ENCODE measurements at regions of chr7 and their contacts with region 1.

Region 1: GRCh38 chr7:140084972-140085371 is 22.2 kb upstream of the PARP12 start:
- DNase-seq: no peak
- H3K4me3 ChIP-seq: no peak overlapping the region
- H3K4me3 Mint-ChIP-seq: peak overlapping the region in 7 of 8 donors; percentile 2 to 64 (median 26)
- H3K27ac ChIP-seq: no peak overlapping the region
- H3K27ac Mint-ChIP-seq: peak overlapping the region in 6 of 7 donors; percentile 2 to 82 (median 70)
- H3K4me1 ChIP-seq: peaks cover 21% of the 10 kb centered on the region
- H3K4me1 Mint-ChIP-seq: peaks cover 23 to 35% (median 29%) of the 10 kb centered on the region in 4 donors
- H3K27me3 ChIP-seq: no peaks in the 10 kb centered on the region
- H3K27me3 Mint-ChIP-seq: no peaks in the 10 kb centered on the region

Region 2: GRCh38 chr7:140062528-140063299 is 22.3 kb before region 1 on chr7 and contains the start of gene PARP12:
- CTCF ChIA-PET with region 1: interaction called, 3 read pairs
- POLR2A ChIA-PET with region 1: interaction called, 5 read pairs
- intact Hi-C with region 1: loop called (anchors 2 kb)
- DNase-seq: peak; percentile 84 to 89 (median 86)
- H3K4me3 ChIP-seq: peak within 1 kb of the TSS; percentile 54 to 89
- H3K4me3 Mint-ChIP-seq: peak within 1 kb of the TSS; percentile 92 to 96 (median 95)
- H3K27ac ChIP-seq: peak within 1 kb of the TSS; percentile 84
- H3K27ac Mint-ChIP-seq: peak within 1 kb of the TSS; percentile 86 to 99 (median 91)
- H3K4me1 ChIP-seq: peaks cover 45% of the 10 kb centered on the region
- H3K4me1 Mint-ChIP-seq: peaks cover 31 to 56% (median 43%) of the 10 kb centered on the region in 4 donors
- H3K27me3 ChIP-seq: no peaks in the 10 kb centered on the region
- H3K27me3 Mint-ChIP-seq: no peaks in the 10 kb centered on the region
- total RNA-seq, gene PARP12: 91.8 to 96.6 TPM

Region 3: GRCh38 chr7:140122965-140123364 is 38.0 kb after region 1 on chr7:
- CTCF ChIA-PET with region 1: no interaction called
- POLR2A ChIA-PET with region 1: no interaction called
- intact Hi-C with region 1: no loop called
- DNase-seq: no peak
- H3K4me3 ChIP-seq: no peak overlapping the region
- H3K4me3 Mint-ChIP-seq: no peak overlapping the region
- H3K27ac ChIP-seq: no peak overlapping the region
- H3K27ac Mint-ChIP-seq: peak overlapping the region in 1 of 7 donors; percentile 22
- H3K4me1 ChIP-seq: no peaks in the 10 kb centered on the region
- H3K4me1 Mint-ChIP-seq: peaks cover 0 to 5% (median 0%) of the 10 kb centered on the region in 4 donors
- H3K27me3 ChIP-seq: no peaks in the 10 kb centered on the region
- H3K27me3 Mint-ChIP-seq: no peaks in the 10 kb centered on the region

Region 4: GRCh38 chr7:141754939-141755338 is 1670.0 kb after region 1 on chr7:
- CTCF ChIA-PET with region 1: no interaction called
- POLR2A ChIA-PET with region 1: no interaction called
- intact Hi-C with region 1: no loop called
- DNase-seq: peak in 3 of 5 donors; percentile 9 to 20 (median 11)
- H3K4me3 ChIP-seq: no peak overlapping the region
- H3K4me3 Mint-ChIP-seq: no peak overlapping the region
- H3K27ac ChIP-seq: no peak overlapping the region
- H3K27ac Mint-ChIP-seq: no peak overlapping the region
- H3K4me1 ChIP-seq: no peaks in the 10 kb centered on the region
- H3K4me1 Mint-ChIP-seq: peaks cover 0 to 14% (median 3%) of the 10 kb centered on the region in 4 donors
- H3K27me3 ChIP-seq: no peaks in the 10 kb centered on the region
- H3K27me3 Mint-ChIP-seq: no peaks in the 10 kb centered on the region

Measured in CD4-positive, alpha-beta memory T cell (primary cell).